Activated CD4-positive, alpha-beta T cell treated with anti-CD3 and anti-CD28 coated beads, Interleukin-2, amount 10 ng/mL, durations not matched to agents 7 days and 5 days (primary cell): ENCODE measurements at regions of chr4 and their contacts with region 1.

Region 1: DNA sequence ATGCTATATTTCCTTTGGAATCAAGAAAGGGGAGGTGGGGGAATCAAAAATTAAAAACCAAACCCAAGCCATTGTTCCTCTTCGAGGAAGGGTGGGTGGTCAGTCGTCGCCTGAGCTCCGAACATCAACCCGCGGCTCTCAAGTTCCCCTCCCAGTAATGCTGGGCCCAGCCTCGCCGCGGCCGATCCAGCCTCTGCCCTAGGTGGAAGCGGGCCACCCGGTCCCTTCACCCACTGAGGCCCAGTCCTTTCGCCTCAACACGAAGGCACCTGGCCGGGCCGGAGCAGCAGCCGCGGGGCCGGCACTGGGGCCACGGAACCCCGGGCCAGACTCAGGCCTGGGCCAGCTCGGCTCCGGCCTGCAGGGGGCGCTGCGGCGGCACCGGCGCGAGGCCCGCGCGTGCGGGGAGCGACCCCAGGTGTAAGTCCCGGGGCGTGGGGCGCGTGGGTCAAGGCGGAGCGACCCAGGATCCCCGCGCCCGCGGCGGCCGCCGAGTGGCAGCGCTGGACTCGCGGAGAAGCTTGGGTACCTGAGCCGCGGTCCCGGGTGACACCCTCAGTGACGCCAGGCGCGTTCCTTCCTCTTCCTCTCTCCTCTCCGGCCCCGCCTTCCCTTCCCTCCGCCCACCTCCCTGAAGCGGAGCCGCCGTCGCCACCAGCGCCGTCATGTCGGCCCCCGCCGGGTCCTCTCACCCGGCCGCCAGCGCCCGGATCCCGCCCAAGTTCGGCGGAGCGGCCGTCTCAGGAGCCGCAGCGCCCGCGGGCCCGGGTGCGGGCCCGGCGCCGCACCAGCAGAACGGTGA is at the start of gene SEC24B:
- DNase-seq: peak; percentile 93
- H3K4me3 Mint-ChIP-seq: peak within 1 kb of the TSS; percentile 82
- H3K27ac Mint-ChIP-seq: peak within 1 kb of the TSS; percentile 91
- H3K4me1 Mint-ChIP-seq: peaks cover 52% of the 10 kb centered on the region
- H3K27me3 Mint-ChIP-seq: no peaks in the 10 kb centered on the region
- total RNA-seq, gene SEC24B: 24.9 to 31.3 TPM

Region 2: GRCh38 chr4:109462297-109462696 is 28.9 kb after region 1 on chr4:
- CTCF ChIA-PET with region 1: interaction called, 13 read pairs
- POLR2A ChIA-PET with region 1: no interaction called
- DNase-seq: no peak
- H3K4me3 Mint-ChIP-seq: no peak overlapping the region
- H3K27ac Mint-ChIP-seq: no peak overlapping the region
- H3K4me1 Mint-ChIP-seq: peaks cover 8% of the 10 kb centered on the region
- H3K27me3 Mint-ChIP-seq: no peaks in the 10 kb centered on the region

Region 3: DNA sequence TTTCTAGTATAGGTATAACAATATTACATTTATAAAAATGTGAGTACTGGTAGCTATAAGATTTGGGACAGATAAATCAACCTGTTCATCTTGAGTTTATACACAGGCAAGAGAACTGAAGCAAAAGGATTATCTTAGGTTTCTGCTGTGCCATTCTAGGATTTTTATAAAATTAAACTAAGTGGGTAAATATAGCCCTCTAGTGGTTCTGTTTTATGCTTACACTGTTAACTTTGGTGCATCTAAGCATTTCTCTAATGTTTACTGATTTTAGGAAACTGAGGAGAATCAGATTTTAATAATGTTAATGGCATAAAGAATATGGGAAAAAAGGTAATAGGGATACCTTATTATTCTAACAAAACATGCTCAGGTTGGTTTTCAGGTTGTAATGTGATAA is 393.3 kb after region 1 on chr4:
- CTCF ChIA-PET with region 1: interaction called, 12 read pairs
- POLR2A ChIA-PET with region 1: no interaction called
- DNase-seq: no peak
- H3K4me3 Mint-ChIP-seq: no peak overlapping the region
- H3K27ac Mint-ChIP-seq: no peak overlapping the region
- H3K4me1 Mint-ChIP-seq: peaks cover 5% of the 10 kb centered on the region
- H3K27me3 Mint-ChIP-seq: no peaks in the 10 kb centered on the region